GM18951 (cell line): ENCODE measurements at regions of chr1 and their contacts with region 1.

Region 1: GRCh38 chr1:112501810-112502641 is 6.7 kb upstream of the WNT2B start:
- POLR2A ChIP-seq: no peak

Region 2: DNA sequence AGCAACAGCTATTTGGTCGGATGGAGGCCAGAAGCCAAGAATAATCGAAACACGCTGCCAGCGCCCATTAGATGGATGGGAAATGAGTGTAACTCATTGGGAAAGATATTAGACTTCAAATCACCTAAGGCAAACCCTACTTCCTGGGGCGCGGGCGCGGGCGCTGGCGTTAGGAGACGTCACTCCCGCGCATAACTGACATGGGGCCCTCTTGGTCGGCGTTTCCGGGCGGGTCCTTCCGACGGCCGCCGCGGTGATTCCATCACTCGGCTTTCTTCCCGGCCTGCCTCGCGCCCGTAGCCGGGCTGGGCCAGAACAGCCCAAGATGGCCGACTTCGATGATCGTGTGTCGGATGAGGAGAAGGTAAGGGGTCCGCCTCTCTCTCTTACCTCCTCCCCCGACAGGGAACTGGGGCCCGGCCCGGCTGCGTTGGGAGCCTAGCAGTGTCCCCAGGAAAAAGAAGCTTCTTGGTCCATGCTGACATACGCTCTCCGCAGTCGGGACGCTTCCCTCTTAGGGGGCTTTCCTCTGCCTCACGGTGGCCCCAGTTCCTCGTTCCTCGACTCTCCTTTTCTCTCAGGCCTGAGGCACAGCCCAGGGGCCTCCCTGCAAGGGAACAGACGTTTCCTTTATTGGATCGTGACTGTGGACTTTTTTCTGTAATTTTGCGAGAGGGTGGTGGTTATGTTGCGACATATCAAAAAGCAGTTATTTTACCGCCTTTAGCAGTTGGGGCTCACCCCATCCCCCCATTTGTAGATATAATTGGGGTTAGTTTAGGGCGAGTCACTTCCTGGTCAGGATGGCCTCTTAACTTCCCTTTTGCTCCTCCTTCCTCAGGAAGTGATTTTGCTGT is 117.7 kb after region 1 on chr1 and contains the start of gene CAPZA1:
- in situ Hi-C with region 1: loop called (anchors 10 kb)
- POLR2A ChIP-seq: peak; percentile 94

Region 3: DNA sequence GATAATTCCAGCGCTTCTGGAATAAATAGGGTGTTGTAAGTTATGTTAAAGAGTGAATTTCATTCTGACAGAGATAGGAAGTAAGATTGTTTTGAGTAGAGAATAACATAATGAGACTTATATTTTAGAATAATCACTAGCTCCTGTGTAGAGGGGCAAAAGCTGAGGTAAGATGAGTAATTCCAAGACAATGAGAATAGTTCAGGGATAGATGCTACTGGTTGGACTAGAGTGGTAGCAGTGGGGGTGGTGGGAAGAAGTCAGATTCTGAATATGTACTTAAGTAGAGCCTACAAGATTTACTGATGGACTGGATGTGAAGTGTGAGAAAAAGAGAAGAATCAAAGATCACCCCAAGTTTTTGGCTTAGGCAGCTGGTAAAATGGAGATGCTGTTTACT is 149.2 kb after region 1 on chr1:
- in situ Hi-C with region 1: no loop called
- POLR2A ChIP-seq: no peak

Region 4: DNA sequence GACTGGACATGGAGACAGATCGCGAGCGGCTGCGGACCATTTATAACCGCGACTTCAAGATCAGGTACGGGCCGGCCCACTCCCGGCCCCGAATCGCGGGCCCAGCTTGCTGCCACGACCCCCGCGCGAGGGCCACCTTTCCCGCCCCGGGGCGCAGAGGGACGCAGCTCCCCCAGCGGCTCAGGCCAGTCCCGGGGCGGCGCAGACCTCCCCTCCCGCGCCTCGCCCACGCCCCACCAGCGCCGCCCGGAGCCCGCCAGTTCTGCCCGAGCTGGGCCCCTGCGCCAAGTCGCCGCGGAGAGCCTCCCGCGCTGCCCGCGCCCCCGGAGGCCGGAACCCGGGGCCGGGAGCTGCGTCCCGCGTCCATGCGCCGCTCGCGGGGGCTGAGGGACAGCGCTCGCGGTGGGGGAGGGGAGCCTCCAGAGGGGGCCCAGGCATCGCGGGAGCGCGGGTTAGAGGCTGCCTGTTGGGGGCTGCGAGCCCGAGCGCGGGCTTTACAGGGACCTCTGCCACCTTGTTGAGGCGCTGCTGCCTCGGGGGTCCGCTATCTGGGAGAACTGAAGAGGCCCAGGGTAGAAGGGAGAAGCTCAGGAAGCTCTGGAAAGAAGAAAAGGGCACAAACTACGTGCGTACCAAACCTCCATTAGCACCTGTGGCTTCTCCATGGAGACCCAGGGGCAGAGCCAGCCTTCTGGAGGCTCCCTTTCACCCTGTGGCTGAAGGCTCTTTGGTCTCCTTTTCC is 173.1 kb after region 1 on chr1:
- in situ Hi-C with region 1: loop called (anchors 25 kb)
- POLR2A ChIP-seq: no peak